ENCODE measurements at regions of chr9 and their contacts with region 1.

Region 1: GRCh38 chr9:121321016-121321503 is 49.0 kb downstream of the STOM start:
- DNase-seq: no peak

Region 2: DNA sequence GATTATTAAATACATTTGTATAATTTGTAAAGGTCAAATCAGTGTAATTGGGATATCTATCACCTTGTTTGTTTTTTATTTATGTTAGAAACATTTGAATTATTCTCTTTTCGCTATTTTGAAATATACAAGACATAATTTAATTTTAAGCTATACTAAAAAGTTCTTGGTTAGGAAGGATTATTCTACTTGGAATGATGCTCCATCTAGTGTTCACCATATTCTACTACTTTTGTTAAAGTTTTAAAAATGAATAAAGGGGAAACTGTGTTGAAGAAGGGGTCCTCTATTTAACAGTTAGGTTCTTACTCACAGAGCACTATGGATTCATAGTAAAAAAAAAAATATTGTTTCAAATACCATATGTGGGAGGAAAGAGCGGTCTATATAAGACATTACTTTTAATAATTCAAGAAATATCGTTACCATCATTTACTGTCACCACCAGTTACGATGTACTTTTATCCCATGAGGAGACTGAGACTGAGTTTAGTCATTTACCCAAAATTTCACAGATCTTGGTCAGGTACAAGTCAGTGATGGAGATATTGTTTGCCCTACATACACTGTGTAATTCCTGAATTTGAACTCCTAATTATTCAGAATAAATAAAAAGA is 55.3 kb after region 1 on chr9:
- CTCF ChIA-PET with region 1: interaction called, 12 read pairs
- POLR2A ChIA-PET with region 1: no interaction called
- DNase-seq: no peak

Region 3: GRCh38 chr9:121388140-121388905 is 67.3 kb after region 1 on chr9:
- CTCF ChIA-PET with region 1: interaction called, 11 read pairs
- POLR2A ChIA-PET with region 1: no interaction called
- DNase-seq: no peak

Region 4: GRCh38 chr9:121399883-121400607 is 79.0 kb after region 1 on chr9:
- CTCF ChIA-PET with region 1: interaction called, 17 read pairs
- POLR2A ChIA-PET with region 1: interaction called, 3 read pairs
- DNase-seq: peak; percentile 39

Measured in HEK293T (cell line).